ENCODE measurements at regions of chrX and their contacts with region 1.

Region 1: GRCh38 chrX:129427267-129427666 is 96.0 kb downstream of the SMARCA1 start:
- DNase-seq: no peak
- ATAC-seq: no peak
- H3K4me3 ChIP-seq: no peak overlapping the region
- H3K27ac ChIP-seq: no peak overlapping the region
- H3K4me1 ChIP-seq: no peaks in the 10 kb centered on the region
- H3K27me3 ChIP-seq: no peaks in the 10 kb centered on the region
- CTCF ChIP-seq: no peak
- POLR2A ChIP-seq: no peak
- RAD21 ChIP-seq: no peak

Region 2: GRCh38 chrX:129404430-129405008 is 22.7 kb before region 1 on chrX:
- CTCF ChIA-PET with region 1: no interaction called
- POLR2A ChIA-PET with region 1: interaction called, 19 read pairs
- dilution Hi-C with region 1: no loop called
- in situ Hi-C with region 1: no loop called
- intact Hi-C with region 1: no loop called
- DNase-seq: no peak
- ATAC-seq: no peak
- H3K4me3 ChIP-seq: no peak overlapping the region
- H3K27ac ChIP-seq: no peak overlapping the region
- H3K4me1 ChIP-seq: no peaks in the 10 kb centered on the region
- H3K27me3 ChIP-seq: no peaks in the 10 kb centered on the region
- CTCF ChIP-seq: no peak
- POLR2A ChIP-seq: no peak
- RAD21 ChIP-seq: no peak

Region 3: DNA sequence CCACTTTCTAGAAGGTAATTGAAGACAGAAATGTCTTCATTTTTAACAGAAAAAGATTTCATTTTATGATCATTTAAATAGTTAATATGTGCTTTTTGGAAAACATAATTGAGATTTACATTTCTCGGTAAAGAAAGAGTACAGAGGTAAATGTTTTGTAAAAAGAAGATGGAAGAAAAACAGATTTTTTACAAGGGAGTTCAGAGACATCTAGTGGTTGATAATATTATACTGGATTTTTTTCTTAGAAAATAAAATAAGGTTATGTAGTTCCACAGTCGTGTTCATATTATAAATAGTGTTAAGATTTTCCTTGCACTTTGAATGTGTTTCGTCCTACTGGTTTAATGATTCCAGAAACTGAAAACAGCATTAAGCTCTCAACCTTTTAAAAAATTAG is 35.4 kb after region 1 on chrX:
- CTCF ChIA-PET with region 1: no interaction called
- POLR2A ChIA-PET with region 1: no interaction called
- dilution Hi-C with region 1: no loop called
- in situ Hi-C with region 1: no loop called
- intact Hi-C with region 1: no loop called
- DNase-seq: no peak
- ATAC-seq: no peak
- H3K4me3 ChIP-seq: no peak overlapping the region
- H3K27ac ChIP-seq: no peak overlapping the region
- H3K4me1 ChIP-seq: no peaks in the 10 kb centered on the region
- H3K27me3 ChIP-seq: no peaks in the 10 kb centered on the region
- CTCF ChIP-seq: no peak; the same call in 1 of the 2 replicates
- POLR2A ChIP-seq: no peak
- RAD21 ChIP-seq: no peak

Region 4: GRCh38 chrX:130285069-130285620 is 857.9 kb after region 1 on chrX:
- CTCF ChIA-PET with region 1: no interaction called
- POLR2A ChIA-PET with region 1: no interaction called
- dilution Hi-C with region 1: no loop called
- in situ Hi-C with region 1: no loop called
- intact Hi-C with region 1: no loop called
- DNase-seq: no peak
- ATAC-seq: no peak
- H3K4me3 ChIP-seq: no peak overlapping the region
- H3K27ac ChIP-seq: no peak overlapping the region
- H3K4me1 ChIP-seq: no peaks in the 10 kb centered on the region
- H3K27me3 ChIP-seq: peaks cover 3% of the 10 kb centered on the region
- CTCF ChIP-seq: no peak
- POLR2A ChIP-seq: no peak
- RAD21 ChIP-seq: no peak